H1 (cell line): ENCODE measurements at regions of chr15 and their contacts with region 1.

Region 1: DNA sequence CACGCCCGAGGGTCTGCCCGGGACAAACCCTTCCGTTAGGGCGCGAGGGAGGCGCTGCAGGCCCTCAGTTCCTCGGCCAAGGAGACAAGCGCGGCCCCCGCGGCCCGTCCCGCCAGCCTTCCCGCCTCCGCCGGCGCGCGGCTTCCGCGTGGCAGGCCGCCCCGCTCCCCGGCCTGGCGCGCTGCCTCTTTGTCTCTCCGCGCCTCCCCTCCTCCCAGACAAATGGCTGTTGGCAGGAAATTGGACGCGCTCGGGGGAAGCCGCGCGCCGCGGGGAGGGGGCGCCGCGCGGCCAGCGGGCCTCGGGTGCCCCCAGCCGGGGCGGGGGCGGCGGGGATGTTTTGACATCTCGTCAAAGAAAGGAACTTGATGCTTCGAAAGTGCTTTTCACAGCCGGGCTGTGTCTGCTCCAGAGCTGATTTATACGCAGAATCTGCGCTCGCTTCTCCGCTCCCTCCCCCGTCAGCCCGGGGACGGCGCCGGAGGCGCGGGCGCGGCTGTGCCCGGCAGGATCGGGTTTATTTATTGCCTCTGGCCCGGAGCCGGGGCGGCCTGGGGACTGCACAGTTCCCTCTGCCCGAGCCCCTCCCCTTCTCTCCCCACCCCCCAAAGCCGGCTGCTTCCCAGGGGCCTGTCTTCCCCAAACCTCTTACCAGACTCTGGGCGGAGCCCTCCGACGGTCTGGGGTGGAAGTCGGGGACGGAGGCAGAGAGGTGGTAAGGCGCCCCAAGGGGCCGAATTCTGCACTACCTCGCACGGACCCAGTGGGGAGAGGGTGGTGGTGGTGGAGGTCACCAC is 20.7 kb downstream of the SHF start:
- DNase-seq: peak; percentile 84 to 90
- H3K4me3 ChIP-seq: peak overlapping the region; percentile 57 to 78 (median 60)
- H3K27ac ChIP-seq: peak overlapping the region; percentile 85
- H3K4me1 ChIP-seq: peaks cover 0 to 19% (median 15%) of the 10 kb centered on the region in 4 experiments; a peak in 5 of 7 replicates
- H3K27me3 ChIP-seq: no peaks in the 10 kb centered on the region
- CTCF ChIP-seq: peak; percentile 67 to 75 (median 74)
- EP300 ChIP-seq: peak in 1 of 2 experiments; percentile 16; a peak in 1 of 3 replicates
- POLR2A ChIP-seq: peak; percentile 46 to 75
- RAD21 ChIP-seq: peak; percentile 32 to 42

Region 2: GRCh38 chr15:44999105-44999504 is 167.9 kb before region 1 on chr15:
- CTCF ChIA-PET with region 1: no interaction called
- POLR2A ChIA-PET with region 1: no interaction called
- DNase-seq: no peak
- H3K4me3 ChIP-seq: no peak overlapping the region
- H3K27ac ChIP-seq: no peak overlapping the region
- H3K4me1 ChIP-seq: no peaks in the 10 kb centered on the region
- H3K27me3 ChIP-seq: no peaks in the 10 kb centered on the region
- CTCF ChIP-seq: no peak
- EP300 ChIP-seq: no peak
- POLR2A ChIP-seq: no peak
- RAD21 ChIP-seq: no peak

Region 3: GRCh38 chr15:45126535-45127158 is 40.4 kb before region 1 on chr15:
- CTCF ChIA-PET with region 1: interaction called, 32 read pairs
- POLR2A ChIA-PET with region 1: interaction called, 4 read pairs
- DNase-seq: no peak
- H3K4me3 ChIP-seq: no peak overlapping the region
- H3K27ac ChIP-seq: no peak overlapping the region
- H3K4me1 ChIP-seq: peaks cover 0 to 6% (median 2%) of the 10 kb centered on the region in 4 experiments; a peak in 4 of 7 replicates
- H3K27me3 ChIP-seq: peaks cover 45 to 75% (median 56%) of the 10 kb centered on the region in 4 experiments
- CTCF ChIP-seq: peak in 2 of 3 experiments; percentile 48 to 52; a peak in 2 of 4 replicates
- EP300 ChIP-seq: no peak
- POLR2A ChIP-seq: no peak
- RAD21 ChIP-seq: peak; percentile 39 to 58; a peak in 3 of 4 replicates

Region 4: DNA sequence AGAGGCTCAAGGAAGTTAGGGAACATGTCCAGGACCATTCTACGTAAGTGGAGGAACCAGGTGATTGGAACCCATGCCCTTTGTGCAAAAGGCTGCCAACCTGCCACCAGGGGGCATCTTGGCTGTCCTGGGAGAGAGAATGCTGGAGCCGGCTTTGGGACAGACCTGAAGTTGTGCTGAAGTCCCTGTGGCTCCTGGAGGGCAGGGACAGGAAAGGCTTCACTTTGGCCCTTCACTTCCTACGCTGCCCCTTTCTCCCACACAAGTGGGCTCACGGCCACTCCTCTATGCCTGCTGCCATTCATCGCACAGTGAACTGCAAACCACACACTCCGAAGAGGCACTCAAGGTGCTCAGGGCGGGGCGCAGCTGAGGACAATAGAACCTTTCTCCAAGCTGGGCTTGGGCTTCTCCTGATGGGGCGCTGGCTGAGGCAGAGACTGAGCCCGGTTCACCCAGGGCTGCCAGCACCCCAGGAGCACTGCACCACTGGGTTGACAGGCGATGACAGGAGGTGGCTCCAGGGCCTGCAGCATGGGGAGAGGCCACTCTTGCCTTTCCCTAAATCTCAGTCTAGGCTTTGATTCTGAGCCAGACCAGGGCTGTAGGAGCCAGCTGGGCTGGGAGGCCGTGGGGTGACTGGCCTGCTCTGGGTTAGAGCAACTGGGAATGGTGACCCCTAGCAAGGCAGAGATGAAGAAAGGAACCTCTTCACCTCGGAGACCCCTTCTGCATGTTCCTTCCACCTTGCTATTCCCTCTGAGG is 12.4 kb after region 1 on chr15:
- CTCF ChIA-PET with region 1: interaction called, 1,117 read pairs
- POLR2A ChIA-PET with region 1: interaction called, 50 read pairs
- DNase-seq: peak in 1 of 2 experiments; percentile 75
- H3K4me3 ChIP-seq: no peak overlapping the region
- H3K27ac ChIP-seq: no peak overlapping the region
- H3K4me1 ChIP-seq: peaks cover 5 to 24% (median 15%) of the 10 kb centered on the region in 4 experiments
- H3K27me3 ChIP-seq: no peaks in the 10 kb centered on the region
- CTCF ChIP-seq: peak; percentile 69 to 90 (median 73)
- EP300 ChIP-seq: no peak
- POLR2A ChIP-seq: no peak
- RAD21 ChIP-seq: peak; percentile 39 to 63

Region 5: DNA sequence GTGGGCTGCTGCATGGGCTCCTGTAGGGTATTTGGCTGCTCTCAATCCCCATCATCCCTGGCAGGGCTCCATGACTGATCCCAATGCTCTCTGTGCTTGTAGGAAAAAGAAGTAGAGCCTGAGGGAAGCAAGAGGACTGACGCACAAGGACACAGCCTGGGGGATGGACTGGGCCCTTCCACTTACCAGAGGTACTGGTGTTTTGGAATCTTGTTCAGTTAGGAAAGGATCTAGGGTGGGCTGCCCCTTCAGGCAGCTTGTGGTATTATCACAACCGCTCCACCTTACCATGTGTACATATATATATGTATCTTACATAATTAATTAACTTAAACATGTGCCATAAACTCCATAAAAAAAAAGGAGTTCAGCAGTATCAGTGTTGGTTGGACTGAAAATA is 86.3 kb after region 1 on chr15:
- CTCF ChIA-PET with region 1: interaction called, 11 read pairs
- POLR2A ChIA-PET with region 1: interaction called, 4 read pairs
- DNase-seq: peak in 1 of 2 experiments; percentile 47
- H3K4me3 ChIP-seq: no peak overlapping the region
- H3K27ac ChIP-seq: no peak overlapping the region
- H3K4me1 ChIP-seq: no peaks in the 10 kb centered on the region; a peak in 1 of 7 replicates
- H3K27me3 ChIP-seq: no peaks in the 10 kb centered on the region
- CTCF ChIP-seq: peak in 2 of 3 experiments; percentile 38 to 46; a peak in 2 of 4 replicates
- EP300 ChIP-seq: no peak
- POLR2A ChIP-seq: no peak
- RAD21 ChIP-seq: peak; percentile 11 to 32; a peak in 3 of 4 replicates

Region 6: GRCh38 chr15:45391746-45392583 is 224.9 kb after region 1 on chr15:
- CTCF ChIA-PET with region 1: interaction called, 11 read pairs
- POLR2A ChIA-PET with region 1: interaction called, 3 read pairs
- DNase-seq: no peak
- H3K4me3 ChIP-seq: no peak overlapping the region
- H3K27ac ChIP-seq: no peak overlapping the region
- H3K4me1 ChIP-seq: no peaks in the 10 kb centered on the region
- H3K27me3 ChIP-seq: peaks cover 0 to 5% (median 0%) of the 10 kb centered on the region in 4 experiments; a peak in 2 of 7 replicates
- CTCF ChIP-seq: no peak
- EP300 ChIP-seq: no peak
- POLR2A ChIP-seq: no peak
- RAD21 ChIP-seq: no peak